ENCODE measurements at regions of chr11 and their contacts with region 1.

Region 1: DNA sequence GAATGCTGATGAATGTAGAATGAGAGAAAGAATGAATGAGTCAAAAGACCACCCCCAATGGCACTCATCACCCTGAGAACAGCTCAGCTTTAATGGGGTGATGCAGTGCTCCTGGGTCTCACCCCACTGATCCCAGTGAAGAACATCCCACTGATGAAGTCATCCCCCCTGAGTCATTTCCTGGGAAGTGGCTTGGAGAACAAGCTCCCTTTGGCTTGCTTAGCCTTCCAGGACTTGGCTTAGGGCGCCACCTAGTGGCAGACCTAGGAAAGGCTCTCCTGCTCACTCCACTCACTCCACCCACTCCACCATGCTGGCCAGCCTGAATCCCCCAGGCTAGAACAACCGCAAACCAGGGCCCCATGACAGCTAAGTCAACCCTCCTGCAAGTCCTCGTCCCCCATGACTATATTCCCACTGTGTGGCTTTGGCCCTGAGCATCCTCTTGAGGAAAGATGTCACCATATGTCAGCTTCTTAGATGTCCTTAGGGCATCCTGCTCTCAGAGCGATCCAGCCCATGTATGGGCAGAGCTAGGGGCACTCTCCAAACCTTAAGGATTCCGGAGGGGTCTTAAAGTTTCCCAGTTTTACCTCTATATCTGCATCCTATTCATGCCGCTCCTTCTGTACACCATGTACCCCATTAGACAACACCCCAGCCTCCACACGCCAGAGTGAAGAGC is 17.8 kb upstream of the TMPRSS13 start:
- DNase-seq: peak; percentile 95

Region 2: DNA sequence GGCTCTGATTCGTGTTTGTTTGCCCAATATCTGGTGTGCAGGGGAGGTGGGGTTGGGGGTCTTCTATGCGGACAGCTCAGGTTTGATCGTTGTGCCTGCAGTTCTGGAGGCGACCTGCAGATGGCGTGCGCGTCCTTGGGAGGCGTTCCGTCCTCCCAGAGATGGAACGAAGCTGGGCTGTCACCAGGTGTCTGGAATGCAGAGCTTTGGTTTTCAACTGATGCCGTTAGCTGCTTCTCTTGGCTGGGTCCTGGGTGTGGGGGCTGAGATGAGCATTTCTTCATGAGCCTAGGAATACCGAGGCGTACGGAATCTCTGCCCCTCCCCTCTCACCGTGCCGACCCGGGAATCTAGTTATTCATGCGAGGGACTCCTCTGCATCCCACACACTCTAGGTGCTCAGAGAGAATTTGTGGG is 520.7 kb before region 1 on chr11:
- intact Hi-C with region 1: loop called (anchors 10 kb)
- DNase-seq: no peak

Region 3: GRCh38 chr11:117817368-117818040 is 129.5 kb before region 1 on chr11:
- intact Hi-C with region 1: loop called (anchors 2 kb)
- DNase-seq: peak; percentile 88

Region 4: DNA sequence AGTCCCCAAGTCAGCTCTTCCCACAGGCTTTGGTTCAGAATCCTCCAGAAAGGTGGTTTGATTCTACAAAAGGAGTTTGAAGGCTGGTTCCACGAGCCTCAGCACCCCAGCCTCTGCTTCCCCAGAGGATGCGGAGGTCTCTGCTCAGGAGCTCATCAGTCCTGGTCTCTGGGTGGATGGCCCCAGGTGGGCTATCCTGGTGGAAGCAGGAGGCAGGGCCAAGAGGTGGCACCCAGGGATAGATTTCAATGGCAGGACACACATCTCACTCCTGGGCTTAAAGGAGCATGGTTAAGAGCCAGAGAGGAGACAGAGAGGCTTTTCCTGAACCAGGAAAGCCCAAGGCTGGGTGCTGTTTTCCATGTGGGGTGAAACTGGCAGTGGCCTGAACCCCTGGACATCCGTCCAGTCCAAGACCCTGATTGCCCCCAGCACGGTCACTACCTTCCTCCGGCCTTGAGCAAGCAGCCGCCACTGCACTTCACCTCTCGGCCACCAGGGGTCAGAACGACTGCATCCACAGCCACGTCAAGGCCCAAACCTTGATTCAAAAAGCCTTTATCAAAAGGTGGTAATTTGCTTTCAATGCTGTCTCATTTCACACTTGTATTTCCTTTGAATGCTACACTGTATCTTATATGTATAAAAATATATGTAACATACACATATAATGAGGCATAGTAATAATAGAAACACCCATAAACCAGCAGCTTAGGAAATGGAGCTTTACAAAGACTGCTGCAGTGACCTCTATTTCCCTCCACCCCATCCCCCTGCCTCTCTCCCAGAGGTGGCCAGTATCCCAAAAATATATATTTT is 103.1 kb before region 1 on chr11:
- intact Hi-C with region 1: loop called (anchors 1 kb)
- DNase-seq: peak; percentile 90

Region 5: DNA sequence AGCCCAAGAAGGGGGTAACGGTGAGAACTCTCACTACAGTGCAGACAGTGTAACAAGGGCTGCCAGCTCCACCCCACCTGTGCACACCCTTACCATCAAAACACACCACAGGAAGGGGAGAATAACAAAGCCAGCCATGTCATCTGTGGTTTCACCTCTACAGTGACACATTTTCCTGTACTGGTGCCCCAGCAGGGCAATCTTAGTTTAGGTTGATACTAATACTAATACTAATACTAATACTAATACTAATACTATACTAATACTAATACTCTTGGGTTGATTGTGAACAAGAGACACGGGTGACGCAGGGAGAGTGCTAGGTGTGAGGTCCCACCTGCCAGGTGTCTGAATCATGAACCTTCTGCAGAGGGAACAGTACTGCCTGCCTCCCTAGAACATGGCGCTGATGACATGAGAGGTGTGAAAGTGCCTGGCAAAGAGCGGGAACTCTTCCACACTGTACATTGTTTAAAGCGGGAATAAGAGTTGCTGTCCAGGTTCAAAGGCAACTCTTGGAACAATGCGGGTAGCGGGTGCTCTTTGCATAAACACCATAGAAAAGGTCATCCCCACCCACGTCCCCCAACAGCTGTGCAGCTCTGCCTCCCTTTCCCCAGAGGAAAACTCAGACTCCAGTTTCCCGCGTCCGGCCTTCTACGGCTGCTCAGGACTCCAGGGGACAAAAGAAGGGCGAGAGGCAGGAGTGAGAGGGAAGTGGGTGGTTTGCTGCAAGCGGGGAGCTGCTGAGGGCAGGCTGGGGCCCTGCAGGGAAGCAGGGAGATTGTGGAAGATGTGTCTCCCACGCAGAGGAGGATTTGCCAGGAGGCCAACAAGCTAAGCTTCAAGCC is 104.9 kb after region 1 on chr11:
- intact Hi-C with region 1: loop called (anchors 5 kb)
- DNase-seq: peak; percentile 53

Region 6: DNA sequence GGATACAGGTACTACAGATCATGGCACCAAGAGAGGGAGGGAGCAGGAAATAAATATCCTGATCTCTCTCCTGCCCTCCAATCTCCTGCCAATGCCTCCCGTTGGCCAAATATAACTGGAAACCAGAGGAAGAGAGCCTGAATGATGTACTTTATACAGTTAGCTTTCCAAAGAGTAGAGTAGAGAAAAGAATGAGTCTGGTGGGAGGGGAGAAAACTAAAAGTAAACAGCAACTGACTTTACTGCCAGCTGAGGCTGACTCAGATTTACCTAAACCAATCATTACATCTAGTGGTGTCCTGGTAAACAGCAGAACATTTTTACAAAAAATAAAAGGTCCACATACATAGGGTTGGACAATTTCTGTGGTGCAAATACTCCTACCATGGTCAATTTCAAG is 300.1 kb after region 1 on chr11:
- intact Hi-C with region 1: no loop called
- DNase-seq: no peak

Measured in cardiac septum (tissue), 1 donor.